PC-3 (cell line): ENCODE measurements at regions of chr12 and their contacts with region 1.

Region 1: GRCh38 chr12:21818627-21819026 is 44.1 kb upstream of the KCNJ8 start:
- DNase-seq: no peak
- ATAC-seq: no peak
- H3K4me3 ChIP-seq: no peak overlapping the region
- H3K27ac ChIP-seq: no peak overlapping the region
- H3K4me1 ChIP-seq: no peaks in the 10 kb centered on the region
- H3K27me3 ChIP-seq: no peaks in the 10 kb centered on the region
- CTCF ChIP-seq: no peak

Region 2: GRCh38 chr12:21852251-21852650 is 33.6 kb after region 1 on chr12:
- CTCF ChIA-PET with region 1: no interaction called
- POLR2A ChIA-PET with region 1: no interaction called
- intact Hi-C with region 1: loop called (anchors 5 kb)
- DNase-seq: peak; percentile 84
- ATAC-seq: peak; percentile 91
- H3K4me3 ChIP-seq: no peak overlapping the region; the same call in 1 of the 2 replicates
- H3K27ac ChIP-seq: peak overlapping the region; percentile 71
- H3K4me1 ChIP-seq: peaks cover 17% of the 10 kb centered on the region
- H3K27me3 ChIP-seq: no peaks in the 10 kb centered on the region
- CTCF ChIP-seq: no peak